Motor neuron (in vitro differentiated cells): ENCODE measurements at regions of chr11 and their contacts with region 1.

Region 1: DNA sequence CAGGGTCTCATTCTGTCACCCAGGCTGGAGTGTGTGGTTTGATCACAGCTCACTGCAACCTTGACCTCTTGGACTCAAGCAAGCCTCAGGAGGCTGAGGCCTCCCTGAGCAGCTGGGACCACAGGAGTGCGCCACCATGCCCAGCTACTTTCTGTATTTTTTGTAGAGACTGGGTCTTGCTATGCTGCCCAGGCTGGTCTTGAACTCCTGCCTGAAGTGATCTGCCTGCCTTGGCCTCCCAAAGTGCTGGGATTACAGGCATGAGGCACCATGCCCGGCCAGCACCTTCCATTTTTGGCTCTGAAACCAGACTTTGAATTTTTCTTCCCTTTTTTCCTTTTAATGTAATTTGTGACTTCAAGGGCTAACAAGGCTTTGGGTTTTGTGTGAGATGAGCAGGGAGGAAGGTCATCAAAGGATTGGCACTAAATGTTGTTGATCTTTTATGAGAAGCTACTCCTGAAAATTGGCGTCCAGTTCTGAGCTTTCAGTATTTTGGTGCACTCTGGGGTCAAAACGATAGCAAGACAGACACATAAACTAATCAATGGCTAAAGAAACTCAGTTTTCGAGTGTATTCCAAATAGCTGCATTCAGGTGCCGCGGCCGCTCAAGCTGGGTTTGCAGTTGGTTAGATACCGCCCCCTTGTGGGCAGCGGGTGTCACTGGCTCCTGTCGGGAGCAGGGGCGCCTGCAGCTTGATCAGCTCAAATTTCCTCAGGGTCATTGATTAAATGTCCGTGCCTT is 51.9 kb upstream of the CLMP start:
- ATAC-seq: peak; percentile 38 to 95 (median 92)
- H3K4me3 ChIP-seq: no peak overlapping the region
- H3K27ac ChIP-seq: no peak overlapping the region
- H3K4me1 ChIP-seq: peaks cover 5 to 12% of the 10 kb centered on the region in 2 donors

Region 2: DNA sequence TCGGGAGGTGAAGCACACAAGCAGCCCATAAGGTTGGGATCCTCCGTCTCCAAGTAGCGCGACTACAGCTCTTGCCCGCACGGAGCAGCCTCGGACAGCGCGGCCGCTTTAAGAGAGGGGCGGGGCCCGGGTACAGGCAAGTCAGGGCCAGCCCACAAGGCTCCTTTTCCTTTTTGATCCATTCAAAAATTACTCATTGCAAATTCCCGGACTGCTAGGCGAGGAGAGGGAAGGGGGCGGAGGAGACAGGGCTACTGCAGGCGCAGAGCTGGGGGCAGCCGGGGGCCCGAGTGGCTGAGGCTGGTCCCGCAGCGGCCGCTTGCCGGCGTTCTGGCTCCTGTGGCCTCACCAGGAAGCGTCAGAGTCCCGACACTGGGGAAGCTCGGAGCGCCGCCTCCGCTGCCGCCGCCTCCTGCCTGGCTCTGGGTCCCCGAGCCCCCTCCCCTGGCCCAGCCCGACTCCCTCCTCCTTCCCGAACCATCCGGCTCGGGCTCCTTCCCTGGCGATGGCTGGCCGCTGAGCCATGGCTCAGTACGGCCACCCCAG is 591.3 kb before region 1 on chr11 and contains the start of gene UBASH3B:
- in situ Hi-C with region 1: no loop called
- ATAC-seq: peak; percentile 73 to 85 (median 79)
- H3K4me3 ChIP-seq: peak within 1 kb of the TSS; percentile 52 to 89 (median 65)
- H3K27ac ChIP-seq: peak within 1 kb of the TSS; percentile 58 to 71
- H3K4me1 ChIP-seq: peaks cover 3 to 5% of the 10 kb centered on the region in 2 donors
- total RNA-seq, gene UBASH3B: 0.72 to 16.5 (median 3.5) TPM

Region 3: DNA sequence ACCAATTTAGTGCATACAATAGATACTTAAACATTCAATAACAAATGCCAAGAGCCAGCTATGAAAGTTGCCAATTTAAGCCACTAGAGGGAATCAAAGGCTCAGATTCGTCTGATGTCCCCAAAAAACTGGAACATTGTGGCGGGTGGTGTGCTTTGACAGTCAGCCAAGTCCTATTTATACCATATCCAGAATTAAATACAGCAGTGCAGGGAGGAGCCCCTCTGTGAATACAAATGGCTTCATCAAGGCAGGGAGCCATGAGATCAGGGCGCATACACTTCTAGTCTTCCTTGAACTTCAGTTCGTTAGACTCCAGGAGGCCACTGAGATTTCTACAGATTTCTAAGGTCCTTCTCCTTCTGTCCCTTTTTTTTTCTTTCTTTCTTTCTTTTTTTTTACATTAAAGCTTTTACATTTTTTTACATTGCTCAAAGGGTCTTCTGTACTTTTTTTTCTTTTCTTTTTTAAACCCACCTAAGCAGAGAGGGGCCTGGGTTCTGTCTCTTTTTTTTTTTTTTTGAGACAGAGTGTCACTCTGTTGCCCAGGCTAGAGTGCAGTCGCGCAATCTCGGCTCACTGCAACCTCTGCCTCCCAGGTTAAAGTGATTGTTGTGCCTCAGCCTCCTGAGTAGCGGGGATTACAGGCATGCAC is 143.5 kb before region 1 on chr11:
- in situ Hi-C with region 1: loop called in 3 of 9 experiments (anchors 10 to 25 kb)
- ATAC-seq: peak; percentile 71 to 99 (median 84)
- H3K4me3 ChIP-seq: no peak overlapping the region
- H3K27ac ChIP-seq: no peak overlapping the region
- H3K4me1 ChIP-seq: peaks cover 0 to 10% of the 10 kb centered on the region in 2 donors

Region 4: GRCh38 chr11:123110356-123110755 is 136.6 kb before region 1 on chr11:
- in situ Hi-C with region 1: loop called (anchors 5 to 25 kb)
- ATAC-seq: no peak
- H3K4me3 ChIP-seq: no peak overlapping the region
- H3K27ac ChIP-seq: no peak overlapping the region
- H3K4me1 ChIP-seq: peaks cover 0 to 6% of the 10 kb centered on the region in 2 donors